B cell (primary cell): ENCODE measurements at regions of chr4 and their contacts with region 1.

Region 1: DNA sequence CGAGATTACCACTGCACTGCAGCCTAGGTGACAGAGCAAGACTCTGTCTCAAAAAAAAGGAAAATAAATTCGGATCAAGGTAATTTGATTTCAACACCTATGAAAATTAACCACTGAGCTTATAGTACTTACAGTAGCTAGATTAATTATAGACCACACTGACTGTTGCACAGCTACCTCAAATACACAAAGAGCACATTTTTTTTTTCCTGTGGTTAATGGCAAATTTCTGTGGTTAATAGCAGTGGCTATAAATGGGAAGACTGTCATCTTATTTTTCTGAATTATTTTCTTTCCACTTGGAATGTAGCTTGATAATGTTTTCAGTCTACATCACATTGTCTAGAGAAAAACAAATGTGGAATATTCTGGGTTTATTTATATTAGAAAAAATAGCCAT is 1661.6 kb upstream of the PCDH7 start:
- DNase-seq: no peak
- ATAC-seq: no peak
- H3K4me3 ChIP-seq: no peak overlapping the region
- H3K4me3 Mint-ChIP-seq: no peak overlapping the region
- H3K27ac ChIP-seq: no peak overlapping the region
- H3K27ac Mint-ChIP-seq: no peak overlapping the region
- H3K4me1 ChIP-seq: no peaks in the 10 kb centered on the region
- H3K4me1 Mint-ChIP-seq: no peaks in the 10 kb centered on the region
- H3K27me3 ChIP-seq: no peaks in the 10 kb centered on the region
- H3K27me3 Mint-ChIP-seq: no peaks in the 10 kb centered on the region
- CTCF ChIP-seq: no peak

Region 2: GRCh38 chr4:29199485-29199884 is 141.0 kb after region 1 on chr4:
- CTCF ChIA-PET with region 1: no interaction called
- POLR2A ChIA-PET with region 1: no interaction called
- intact Hi-C with region 1: no loop called
- DNase-seq: no peak
- ATAC-seq: no peak
- H3K4me3 ChIP-seq: no peak overlapping the region
- H3K4me3 Mint-ChIP-seq: no peak overlapping the region
- H3K27ac ChIP-seq: no peak overlapping the region
- H3K27ac Mint-ChIP-seq: no peak overlapping the region
- H3K4me1 ChIP-seq: no peaks in the 10 kb centered on the region
- H3K4me1 Mint-ChIP-seq: no peaks in the 10 kb centered on the region
- H3K27me3 ChIP-seq: no peaks in the 10 kb centered on the region
- H3K27me3 Mint-ChIP-seq: no peaks in the 10 kb centered on the region
- CTCF ChIP-seq: no peak

Region 3: GRCh38 chr4:29711226-29711625 is 652.7 kb after region 1 on chr4:
- CTCF ChIA-PET with region 1: no interaction called
- POLR2A ChIA-PET with region 1: no interaction called
- intact Hi-C with region 1: loop called (anchors 5 kb)
- DNase-seq: no peak
- ATAC-seq: no peak
- H3K4me3 ChIP-seq: no peak overlapping the region
- H3K4me3 Mint-ChIP-seq: no peak overlapping the region
- H3K27ac ChIP-seq: no peak overlapping the region
- H3K27ac Mint-ChIP-seq: no peak overlapping the region
- H3K4me1 ChIP-seq: no peaks in the 10 kb centered on the region
- H3K4me1 Mint-ChIP-seq: no peaks in the 10 kb centered on the region
- H3K27me3 ChIP-seq: no peaks in the 10 kb centered on the region
- H3K27me3 Mint-ChIP-seq: no peaks in the 10 kb centered on the region
- CTCF ChIP-seq: no peak